PC-9 (cell line): ENCODE measurements at regions of chr3 and their contacts with region 1.

Region 1: GRCh38 chr3:189222927-189223636 is 51.3 kb downstream of the TPRG1 start:
- DNase-seq: no peak
- H3K4me3 ChIP-seq: no peak overlapping the region
- H3K27ac ChIP-seq: no peak overlapping the region
- H3K4me1 ChIP-seq: 0 out of 2 replicates have a peak, but pooled peaks cover 7% of the 10 kb centered on the region
- H3K27me3 ChIP-seq: no peaks in the 10 kb centered on the region
- CTCF ChIP-seq: no peak

Region 2: DNA sequence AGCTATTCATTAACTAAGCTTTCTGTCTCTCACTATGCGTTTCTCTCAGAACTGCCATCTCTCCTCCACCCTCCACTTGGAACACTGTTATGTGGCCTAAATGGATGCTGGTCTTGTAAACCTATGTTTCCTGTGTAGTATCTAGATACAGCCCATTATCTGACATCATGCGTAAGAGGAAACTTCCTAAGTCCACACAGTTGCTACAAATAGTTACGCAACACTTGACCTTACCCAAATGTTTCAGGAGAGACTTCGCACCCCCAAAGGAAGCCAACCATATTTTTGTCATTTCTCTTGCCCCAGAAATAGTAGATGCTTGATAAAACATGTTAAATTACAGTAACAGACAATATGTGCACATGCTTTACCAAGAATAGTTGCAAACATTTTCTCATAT is 138.5 kb before region 1 on chr3:
- CTCF ChIA-PET with region 1: no interaction called
- POLR2A ChIA-PET with region 1: interaction called, 12 read pairs
- intact Hi-C with region 1: no loop called
- DNase-seq: no peak
- H3K4me3 ChIP-seq: no peak overlapping the region
- H3K27ac ChIP-seq: no peak overlapping the region
- H3K4me1 ChIP-seq: 0 out of 2 replicates have a peak, but pooled peaks cover 10% of the 10 kb centered on the region
- H3K27me3 ChIP-seq: no peaks in the 10 kb centered on the region
- CTCF ChIP-seq: no peak

Region 3: GRCh38 chr3:189249987-189250386 is 26.9 kb after region 1 on chr3:
- CTCF ChIA-PET with region 1: no interaction called
- POLR2A ChIA-PET with region 1: no interaction called
- intact Hi-C with region 1: no loop called
- DNase-seq: no peak
- H3K4me3 ChIP-seq: no peak overlapping the region
- H3K27ac ChIP-seq: no peak overlapping the region
- H3K4me1 ChIP-seq: no peaks in the 10 kb centered on the region
- H3K27me3 ChIP-seq: no peaks in the 10 kb centered on the region
- CTCF ChIP-seq: no peak